GM13976 (cell line): ENCODE measurements at regions of chr10 and their contacts with region 1.

Region 1: DNA sequence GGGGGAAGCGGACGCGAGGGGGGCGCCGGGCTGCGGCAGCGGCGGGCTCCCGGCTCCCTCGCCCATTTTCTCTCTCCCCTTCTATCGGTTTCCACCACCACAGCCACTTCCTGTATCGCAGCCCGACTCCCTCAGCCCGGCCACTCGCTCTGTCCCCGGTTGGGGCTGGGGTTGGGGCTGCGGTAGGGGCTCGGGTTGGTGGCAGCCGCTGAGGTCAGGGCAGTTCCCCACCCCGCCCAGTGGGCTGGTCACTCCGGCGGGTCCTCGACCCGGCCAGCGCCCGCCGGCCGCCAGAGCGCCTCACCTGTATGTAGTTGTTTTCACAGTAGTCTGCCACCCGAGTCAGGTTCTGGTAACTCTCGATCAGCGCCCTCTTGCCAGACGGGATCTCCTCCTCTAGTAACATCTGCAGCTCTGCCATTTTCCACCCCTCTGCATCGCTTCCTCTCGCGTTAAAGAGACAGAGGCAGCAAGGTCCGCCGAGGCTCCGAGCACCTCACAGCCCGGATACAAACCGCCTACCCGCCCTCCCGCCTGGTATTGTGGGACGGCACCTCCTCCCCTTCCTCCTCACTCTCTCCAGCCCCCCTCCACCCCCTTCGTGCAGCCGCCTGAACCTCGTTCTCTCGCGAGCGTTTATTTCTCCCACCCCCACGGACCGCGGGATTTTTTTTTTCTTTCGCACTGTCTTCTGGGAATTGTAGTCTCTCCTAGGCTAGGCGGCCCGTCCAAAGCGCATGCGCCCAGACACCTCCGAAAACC is at the start of gene ABI1:
- DNase-seq: peak; percentile 95
- CTCF ChIP-seq: no peak

Region 2: GRCh38 chr10:26642896-26643653 is 217.5 kb before region 1 on chr10:
- in situ Hi-C with region 1: no loop called
- DNase-seq: no peak
- CTCF ChIP-seq: no peak

Region 3: DNA sequence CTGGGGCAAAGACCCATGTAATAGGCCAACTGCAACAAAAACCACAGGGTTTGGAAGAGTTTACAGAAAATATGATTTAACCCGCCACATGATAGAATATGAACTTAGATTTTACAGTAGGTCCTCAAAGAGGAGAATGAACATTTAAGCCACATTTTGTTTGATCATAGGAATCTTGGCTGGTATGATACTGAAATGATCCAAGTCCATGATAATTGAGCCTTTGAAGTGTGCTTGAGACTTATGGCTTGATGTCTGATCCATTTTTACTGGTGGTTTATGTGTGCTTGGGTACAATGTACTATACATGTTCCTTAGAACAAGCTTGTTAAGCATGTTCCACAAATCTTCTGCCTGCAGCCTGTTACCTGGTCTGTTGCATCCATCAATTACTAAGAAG is 204.9 kb before region 1 on chr10:
- in situ Hi-C with region 1: no loop called
- DNase-seq: no peak
- CTCF ChIP-seq: no peak

Region 4: DNA sequence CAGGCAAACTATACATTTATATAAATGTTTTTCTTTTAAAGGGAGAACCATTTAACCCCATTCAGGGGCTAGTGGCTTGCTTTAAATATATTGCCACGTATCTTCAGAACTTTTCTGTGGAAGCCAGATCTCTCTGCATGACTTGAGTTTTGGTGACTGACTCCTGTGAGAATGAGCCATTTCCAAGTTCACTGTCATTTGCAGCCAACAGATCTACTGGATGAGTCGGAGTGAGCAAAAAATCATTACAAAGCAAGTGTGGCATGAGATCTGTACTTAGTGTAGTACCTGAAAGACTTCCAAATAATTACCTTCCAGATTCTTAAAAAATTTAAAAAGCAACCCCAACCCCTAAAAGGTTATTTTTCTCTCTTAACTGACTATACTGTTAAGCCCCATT is 117.5 kb before region 1 on chr10:
- in situ Hi-C with region 1: loop called (anchors 10 kb)
- DNase-seq: no peak
- CTCF ChIP-seq: no peak